ENCODE measurements at regions of chr4 and their contacts with region 1.

Region 1: DNA sequence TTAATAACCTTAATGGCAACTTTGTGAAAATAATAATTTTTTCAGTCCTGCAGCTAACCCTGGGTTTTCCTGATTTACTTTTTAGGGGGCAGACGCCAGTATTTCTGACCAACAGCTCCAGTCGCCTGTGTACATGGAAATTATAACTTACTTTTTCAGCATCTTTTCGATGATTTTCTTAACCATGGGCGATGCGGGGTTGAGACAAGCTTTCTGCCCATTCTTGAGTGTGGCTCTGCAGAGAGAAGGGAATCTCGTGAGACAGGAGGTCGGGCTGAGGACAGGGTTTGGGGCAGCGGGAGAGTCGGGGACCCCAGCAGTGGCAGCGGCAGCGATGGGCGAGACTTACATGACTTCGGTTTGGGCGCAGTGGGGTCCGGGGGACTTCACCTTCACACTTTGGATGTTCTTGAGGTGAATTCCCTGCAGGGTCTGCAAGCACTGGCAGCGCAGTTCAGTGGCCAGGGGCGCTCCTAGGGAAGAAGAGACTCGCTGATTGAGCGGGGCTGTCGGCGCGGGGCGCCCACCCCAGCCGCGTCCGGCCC is 473 bp downstream of the CXCL2 start:
- DNase-seq: no peak
- H3K4me3 ChIP-seq: peak overlapping the region; percentile 41
- H3K4me3 Mint-ChIP-seq: peak overlapping the region; percentile 98
- H3K27ac Mint-ChIP-seq: peak overlapping the region; percentile 97
- H3K4me1 ChIP-seq: peaks cover 26% of the 10 kb centered on the region
- H3K4me1 Mint-ChIP-seq: peaks cover 27% of the 10 kb centered on the region
- H3K27me3 ChIP-seq: no peaks in the 10 kb centered on the region
- H3K27me3 Mint-ChIP-seq: no peaks in the 10 kb centered on the region
- CTCF ChIP-seq: no peak

Region 2: DNA sequence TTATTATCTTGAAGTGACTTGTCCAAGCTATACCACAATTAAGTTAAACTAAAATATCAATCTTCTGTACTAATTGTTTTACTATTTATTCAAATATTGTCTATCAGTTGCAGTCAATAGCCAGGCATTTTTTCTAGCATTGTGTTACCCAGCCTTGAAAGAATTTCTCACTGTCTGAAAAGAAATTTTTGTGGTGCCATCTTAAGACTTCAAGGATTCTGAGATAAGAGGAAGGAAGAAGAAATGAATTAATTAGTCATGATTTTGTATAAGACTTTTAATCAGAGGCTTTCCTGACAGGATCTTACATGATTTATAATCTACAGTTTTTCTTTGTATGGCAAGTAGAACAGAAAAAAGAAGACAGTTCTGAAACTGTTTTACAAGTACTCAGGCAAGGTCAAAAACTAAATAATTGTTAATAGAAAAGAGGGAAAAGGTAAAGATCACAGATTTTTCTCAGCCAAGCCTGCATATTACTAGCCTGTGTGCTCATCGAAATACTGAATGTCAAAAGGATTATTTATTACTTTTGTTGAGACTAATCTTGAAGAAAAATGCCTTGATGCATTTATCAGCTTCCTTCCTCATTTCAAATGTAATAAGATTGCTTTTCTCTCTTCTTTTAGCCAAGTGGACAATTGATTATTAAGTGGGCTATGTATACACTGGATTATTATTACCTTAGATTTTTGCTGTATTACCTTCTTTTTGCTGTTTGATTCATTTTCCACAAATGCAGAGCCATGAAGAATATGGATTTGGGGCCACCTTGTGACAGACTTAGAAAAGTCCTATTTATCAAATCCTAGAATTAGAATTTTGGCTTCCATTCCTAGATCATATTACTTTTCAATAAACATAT is 175.5 kb before region 1 on chr4:
- CTCF ChIA-PET with region 1: no interaction called
- POLR2A ChIA-PET with region 1: no interaction called
- intact Hi-C with region 1: loop called (anchors 1 kb)
- DNase-seq: peak in 1 of 2 experiments; percentile 12
- H3K4me3 ChIP-seq: no peak overlapping the region
- H3K4me3 Mint-ChIP-seq: no peak overlapping the region
- H3K27ac Mint-ChIP-seq: no peak overlapping the region
- H3K4me1 ChIP-seq: no peaks in the 10 kb centered on the region
- H3K4me1 Mint-ChIP-seq: peaks cover 5% of the 10 kb centered on the region
- H3K27me3 ChIP-seq: no peaks in the 10 kb centered on the region
- H3K27me3 Mint-ChIP-seq: peaks cover 3% of the 10 kb centered on the region
- CTCF ChIP-seq: peak; percentile 7 to 33

Region 3: GRCh38 chr4:73944061-73944875 is 154.3 kb before region 1 on chr4:
- CTCF ChIA-PET with region 1: no interaction called
- POLR2A ChIA-PET with region 1: no interaction called
- intact Hi-C with region 1: no loop called
- DNase-seq: no peak
- H3K4me3 ChIP-seq: no peak overlapping the region
- H3K4me3 Mint-ChIP-seq: no peak overlapping the region
- H3K27ac Mint-ChIP-seq: no peak overlapping the region
- H3K4me1 ChIP-seq: no peaks in the 10 kb centered on the region
- H3K4me1 Mint-ChIP-seq: peaks cover 17% of the 10 kb centered on the region
- H3K27me3 ChIP-seq: no peaks in the 10 kb centered on the region
- H3K27me3 Mint-ChIP-seq: no peaks in the 10 kb centered on the region
- CTCF ChIP-seq: no peak

Region 4: GRCh38 chr4:74038161-74039064 is 60.1 kb before region 1 on chr4 and contains the start of gene CXCL3:
- CTCF ChIA-PET with region 1: interaction called, 6 read pairs
- POLR2A ChIA-PET with region 1: no interaction called
- intact Hi-C with region 1: loop called (anchors 1 kb)
- DNase-seq: peak; percentile 71 to 75
- H3K4me3 ChIP-seq: peak within 1 kb of the TSS; percentile 53
- H3K4me3 Mint-ChIP-seq: peak within 1 kb of the TSS; percentile 78
- H3K27ac Mint-ChIP-seq: peak within 1 kb of the TSS; percentile 14
- H3K4me1 ChIP-seq: no peaks in the 10 kb centered on the region; the same call in 1 of the 2 replicates
- H3K4me1 Mint-ChIP-seq: peaks cover 15% of the 10 kb centered on the region
- H3K27me3 ChIP-seq: no peaks in the 10 kb centered on the region
- H3K27me3 Mint-ChIP-seq: no peaks in the 10 kb centered on the region
- CTCF ChIP-seq: no peak
- total RNA-seq, gene CXCL3: 1.9 and 4.3 TPM in 2 replicates

Region 5: DNA sequence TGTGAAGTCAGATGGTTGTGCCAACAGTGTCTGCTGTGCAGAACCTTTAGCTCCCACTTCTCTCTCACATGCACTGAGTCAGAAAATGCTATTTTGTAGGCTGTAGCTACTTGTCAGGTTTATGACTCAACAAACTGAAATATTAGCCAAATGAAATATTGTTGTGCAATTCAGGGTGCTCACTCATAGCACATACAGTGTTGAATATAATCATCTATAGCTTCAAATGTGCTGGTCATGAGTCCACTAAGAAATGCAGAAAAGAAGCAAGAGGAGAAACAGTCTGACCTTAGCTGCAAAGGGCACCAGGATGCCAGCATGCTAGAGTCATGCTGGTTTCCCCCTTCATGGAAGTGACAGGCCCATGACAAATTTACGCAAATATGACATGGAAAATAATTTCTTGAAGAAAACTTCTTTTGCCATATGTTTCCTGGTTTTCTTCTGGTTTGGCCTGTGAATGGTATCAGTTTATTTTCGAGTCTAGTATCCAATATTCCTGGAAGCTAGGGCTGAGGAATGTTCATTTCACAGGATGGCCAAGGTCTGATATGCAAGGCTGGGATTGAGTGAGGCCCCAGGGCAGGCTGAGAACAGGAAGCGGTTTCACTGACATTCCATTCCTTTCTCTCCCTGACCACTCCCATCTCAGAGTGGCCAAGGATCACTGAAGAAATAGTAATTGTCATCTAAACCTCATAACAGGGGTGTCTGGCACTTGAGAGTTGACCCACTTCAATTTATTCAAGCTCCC is 10.8 kb after region 1 on chr4:
- CTCF ChIA-PET with region 1: interaction called, 4 read pairs
- POLR2A ChIA-PET with region 1: no interaction called
- intact Hi-C with region 1: loop called (anchors 1 kb)
- DNase-seq: peak; percentile 63 to 85
- H3K4me3 ChIP-seq: no peak overlapping the region
- H3K4me3 Mint-ChIP-seq: peak overlapping the region; percentile 22
- H3K27ac Mint-ChIP-seq: peak overlapping the region; percentile 84
- H3K4me1 ChIP-seq: peaks cover 30% of the 10 kb centered on the region
- H3K4me1 Mint-ChIP-seq: peaks cover 24% of the 10 kb centered on the region
- H3K27me3 ChIP-seq: no peaks in the 10 kb centered on the region
- H3K27me3 Mint-ChIP-seq: no peaks in the 10 kb centered on the region
- CTCF ChIP-seq: no peak

Region 6: GRCh38 chr4:74353858-74354257 is 255.3 kb after region 1 on chr4:
- CTCF ChIA-PET with region 1: no interaction called
- POLR2A ChIA-PET with region 1: no interaction called
- intact Hi-C with region 1: no loop called
- DNase-seq: no peak
- H3K4me3 ChIP-seq: no peak overlapping the region
- H3K4me3 Mint-ChIP-seq: no peak overlapping the region
- H3K27ac Mint-ChIP-seq: no peak overlapping the region
- H3K4me1 ChIP-seq: no peaks in the 10 kb centered on the region
- H3K4me1 Mint-ChIP-seq: no peaks in the 10 kb centered on the region
- H3K27me3 ChIP-seq: no peaks in the 10 kb centered on the region
- H3K27me3 Mint-ChIP-seq: no peaks in the 10 kb centered on the region
- CTCF ChIP-seq: no peak